Activated T-helper 2 cell treated with anti-CD3 and anti-CD28 coated beads, Interferon-gamma antibody, Interleukin-2, Interleukin-4, amounts not matched to agents 10 μg/mL and 5 μg/mL and 100 μg/mL, durations not matched to agents 14 hours and 24 hours and 36 hours (primary cell): ENCODE measurements at regions of chr14 and their contacts with region 1.

Region 1: GRCh38 chr14:102805371-102806246 is 28.4 kb downstream of the TRAF3 start:
- DNase-seq: peak; percentile 40
- H3K4me3 Mint-ChIP-seq: peak overlapping the region; percentile 66
- H3K27ac Mint-ChIP-seq: peak overlapping the region; percentile 92
- H3K4me1 Mint-ChIP-seq: peaks cover 50% of the 10 kb centered on the region
- H3K27me3 Mint-ChIP-seq: no peaks in the 10 kb centered on the region

Region 2: DNA sequence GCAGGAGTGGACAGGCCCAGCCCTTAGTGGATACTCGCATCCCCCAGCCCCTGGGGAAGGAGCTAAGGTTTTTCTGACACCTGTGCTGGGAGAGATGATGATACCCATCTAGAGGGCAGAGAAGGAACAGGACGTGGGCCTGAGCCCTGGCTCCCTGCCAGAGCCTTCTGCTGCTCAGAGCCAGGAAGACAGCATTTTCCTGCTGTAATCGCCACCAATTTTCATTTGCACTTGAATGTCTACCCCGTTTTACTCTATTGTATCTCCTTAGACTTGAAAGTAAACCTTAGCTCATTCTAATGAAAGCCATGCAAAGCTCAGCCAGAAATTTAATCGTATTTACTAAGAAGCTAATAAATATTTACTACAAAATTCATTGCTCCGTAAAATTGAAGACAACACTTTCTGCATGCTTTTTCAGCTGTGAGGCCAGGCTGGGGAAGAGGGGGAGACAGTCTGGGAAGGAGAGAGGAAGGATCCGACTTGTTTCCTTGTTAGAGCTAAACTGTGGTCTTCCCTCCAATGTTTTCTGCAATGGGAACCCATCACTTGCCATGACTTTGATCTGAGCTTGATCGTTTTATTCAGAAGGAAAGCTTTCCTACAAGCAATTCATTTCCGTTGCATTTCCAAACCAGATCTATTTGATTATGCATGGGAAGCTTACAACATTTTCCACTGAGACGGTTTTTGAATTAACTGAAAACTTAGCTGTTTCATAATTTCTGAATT is 46.0 kb before region 1 on chr14:
- intact Hi-C with region 1: no loop called
- DNase-seq: no peak
- H3K4me3 Mint-ChIP-seq: no peak overlapping the region
- H3K27ac Mint-ChIP-seq: no peak overlapping the region
- H3K4me1 Mint-ChIP-seq: no peaks in the 10 kb centered on the region
- H3K27me3 Mint-ChIP-seq: no peaks in the 10 kb centered on the region

Region 3: DNA sequence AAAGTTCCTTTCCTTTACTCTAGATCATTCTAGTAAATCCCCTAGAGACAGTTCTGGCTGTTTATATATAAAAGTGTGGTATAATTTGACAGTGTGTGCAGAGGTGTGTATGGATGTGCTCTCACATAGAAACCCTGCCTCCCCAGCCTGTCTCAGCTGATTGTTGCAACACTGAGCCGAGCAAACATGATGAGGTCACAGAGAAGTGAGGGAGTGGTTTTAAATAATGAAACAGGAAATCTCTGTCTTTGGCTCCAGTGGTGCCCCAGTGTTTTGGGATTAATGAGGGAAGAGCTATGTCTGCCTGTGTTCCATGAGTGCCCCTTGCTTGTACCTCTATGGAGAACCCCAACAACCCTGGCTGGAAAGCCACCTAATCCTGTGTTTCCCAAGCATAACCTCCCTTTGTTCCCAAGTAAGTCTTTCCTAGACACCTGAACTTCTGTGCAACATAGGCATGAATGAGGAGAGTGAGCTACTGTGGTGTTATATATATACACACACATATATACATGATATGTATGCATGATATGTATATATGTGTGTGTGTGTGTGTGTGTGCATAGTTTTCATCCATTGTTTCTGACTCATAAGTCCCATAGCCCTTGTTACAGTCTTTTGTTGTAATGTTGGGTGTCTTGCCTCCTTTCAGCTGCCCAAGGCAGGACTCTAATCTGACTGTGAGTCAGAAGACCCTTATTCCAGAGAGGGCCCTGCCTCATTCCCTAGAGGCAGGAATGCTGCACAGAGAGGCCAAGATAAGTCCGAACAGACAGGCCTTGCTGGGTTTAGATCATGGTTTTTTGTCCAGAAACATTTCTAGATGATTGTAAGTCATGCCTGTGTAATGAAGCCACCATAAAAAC is 10.3 kb before region 1 on chr14:
- intact Hi-C with region 1: loop called (anchors 2 kb)
- DNase-seq: no peak
- H3K4me3 Mint-ChIP-seq: no peak overlapping the region
- H3K27ac Mint-ChIP-seq: peak overlapping the region; percentile 70
- H3K4me1 Mint-ChIP-seq: peaks cover 44% of the 10 kb centered on the region
- H3K27me3 Mint-ChIP-seq: no peaks in the 10 kb centered on the region

Region 4: GRCh38 chr14:102819176-102819628 is 13.6 kb after region 1 on chr14:
- intact Hi-C with region 1: loop called (anchors 1 kb)
- DNase-seq: peak; percentile 50
- H3K4me3 Mint-ChIP-seq: peak overlapping the region; percentile 59
- H3K27ac Mint-ChIP-seq: peak overlapping the region; percentile 88
- H3K4me1 Mint-ChIP-seq: peaks cover 65% of the 10 kb centered on the region
- H3K27me3 Mint-ChIP-seq: no peaks in the 10 kb centered on the region

Region 5: GRCh38 chr14:102831163-102831804 is 25.7 kb after region 1 on chr14:
- intact Hi-C with region 1: loop called (anchors 2 kb)
- DNase-seq: no peak
- H3K4me3 Mint-ChIP-seq: peak overlapping the region; percentile 31
- H3K27ac Mint-ChIP-seq: peak overlapping the region; percentile 85
- H3K4me1 Mint-ChIP-seq: peaks cover 50% of the 10 kb centered on the region
- H3K27me3 Mint-ChIP-seq: no peaks in the 10 kb centered on the region

Region 6: DNA sequence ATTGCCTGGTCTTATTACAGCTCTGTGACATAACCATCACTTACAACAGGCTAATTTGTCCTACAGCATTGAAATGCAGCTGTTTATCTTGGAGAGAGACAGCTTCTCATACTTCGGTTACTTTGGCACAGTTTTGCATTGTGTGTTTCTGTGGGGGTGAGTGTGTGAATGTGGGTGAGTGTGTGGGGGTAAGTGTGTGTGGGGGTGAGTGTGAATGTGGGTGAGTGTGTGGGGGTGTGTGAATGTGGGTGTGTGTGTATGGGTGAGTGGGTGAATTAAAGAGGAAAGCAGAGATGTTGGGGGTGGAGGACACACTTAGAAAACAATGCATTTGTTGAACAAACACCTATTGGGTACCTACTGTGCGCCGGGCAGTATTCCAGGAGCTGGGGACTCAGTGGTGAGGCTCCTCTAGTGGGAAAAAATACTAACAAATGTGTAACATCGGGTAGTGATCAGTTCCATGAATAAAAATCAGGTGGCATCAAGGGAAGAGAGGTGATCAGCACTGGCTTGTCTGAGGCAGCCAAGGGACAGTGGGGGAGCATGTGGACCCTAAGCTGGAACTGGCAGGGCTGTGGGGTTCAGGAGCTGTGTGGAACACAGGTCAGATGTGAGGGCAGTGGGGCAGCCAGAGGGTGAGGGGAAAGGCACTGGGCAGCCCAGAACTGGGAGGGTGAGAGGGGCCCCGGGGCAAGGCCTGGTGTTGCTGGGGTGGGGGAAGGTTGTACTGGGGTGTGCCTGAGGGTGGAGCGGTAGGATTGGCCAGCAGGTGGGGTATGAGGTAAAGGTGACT is 72.8 kb after region 1 on chr14:
- intact Hi-C with region 1: no loop called
- DNase-seq: no peak
- H3K4me3 Mint-ChIP-seq: no peak overlapping the region
- H3K27ac Mint-ChIP-seq: no peak overlapping the region
- H3K4me1 Mint-ChIP-seq: peaks cover 14% of the 10 kb centered on the region
- H3K27me3 Mint-ChIP-seq: no peaks in the 10 kb centered on the region